Vagina (tissue), 2 donors: ENCODE measurements at regions of chr2 and their contacts with region 1.

Region 1: DNA sequence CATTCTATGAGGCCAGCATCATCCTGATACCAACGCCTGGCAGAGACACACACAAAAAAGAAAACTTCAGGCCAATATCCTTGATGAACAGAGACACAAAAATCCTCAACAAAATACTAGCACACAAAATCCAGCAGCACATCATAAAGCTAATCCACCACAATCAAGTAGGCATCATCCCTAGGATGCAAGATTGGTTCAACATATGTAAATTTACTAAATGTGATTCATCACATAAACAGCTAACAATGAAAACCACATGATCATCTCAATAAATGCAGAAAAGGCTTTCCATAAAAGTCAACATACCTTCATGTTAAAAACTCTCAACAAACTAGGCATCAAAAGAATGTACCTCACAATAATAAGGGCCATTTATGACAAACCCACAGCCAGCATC is 65.3 kb downstream of the WDPCP start:
- DNase-seq: no peak
- H3K4me3 ChIP-seq: no peak overlapping the region
- H3K27ac ChIP-seq: no peak overlapping the region
- H3K4me1 ChIP-seq: no peaks in the 10 kb centered on the region
- H3K27me3 ChIP-seq: no peaks in the 10 kb centered on the region
- CTCF ChIP-seq: no peak
- POLR2A ChIP-seq: no peak

Region 2: GRCh38 chr2:63539416-63540162 is 16.6 kb after region 1 on chr2:
- intact Hi-C with region 1: loop called (anchors 2 kb)
- DNase-seq: no peak
- H3K4me3 ChIP-seq: no peak overlapping the region
- H3K27ac ChIP-seq: no peak overlapping the region
- H3K4me1 ChIP-seq: no peaks in the 10 kb centered on the region
- H3K27me3 ChIP-seq: no peaks in the 10 kb centered on the region
- CTCF ChIP-seq: no peak
- POLR2A ChIP-seq: no peak